ENCODE measurements at regions of chr18 and their contacts with region 1.

Region 1: GRCh38 chr18:25921677-25922421 is 168.6 kb downstream of the SS18 start:
- DNase-seq: peak in 2 of 6 donors; percentile 7 to 46
- ATAC-seq: peak in 3 of 4 donors; percentile 56 to 82 (median 78)
- H3K4me3 ChIP-seq: no peak overlapping the region
- H3K27ac ChIP-seq: no peak overlapping the region
- H3K4me1 ChIP-seq: no peaks in the 10 kb centered on the region
- H3K27me3 ChIP-seq: no peaks in the 10 kb centered on the region
- CTCF ChIP-seq: peak; percentile 8 to 38 (median 20)

Region 2: DNA sequence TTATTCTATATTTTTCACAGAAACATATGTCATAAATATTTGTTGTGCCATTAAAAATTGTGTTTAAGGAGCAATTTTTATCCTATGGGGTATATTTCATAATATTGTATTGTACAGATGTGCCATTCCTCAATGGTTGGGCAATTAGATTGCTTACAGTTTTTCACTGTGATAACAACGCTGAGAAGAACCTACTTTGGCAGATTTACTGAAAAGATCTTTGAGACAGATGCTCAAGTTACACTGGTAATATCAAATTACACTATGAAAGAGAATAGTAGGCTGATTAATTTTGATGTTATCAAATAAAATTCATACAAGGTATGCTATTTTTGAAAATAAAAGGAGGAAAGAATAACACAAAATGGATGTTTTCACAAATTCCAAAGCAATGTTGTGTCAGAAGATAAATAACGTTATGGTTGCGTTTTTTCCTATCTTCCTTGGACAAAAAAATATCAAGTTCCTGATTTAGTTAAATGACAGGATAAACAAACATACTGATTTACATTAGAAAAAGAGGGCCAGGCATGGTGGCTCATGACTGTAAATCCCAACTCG is 234.8 kb before region 1 on chr18:
- intact Hi-C with region 1: no loop called
- DNase-seq: no peak
- ATAC-seq: no peak
- H3K4me3 ChIP-seq: no peak overlapping the region
- H3K27ac ChIP-seq: no peak overlapping the region
- H3K4me1 ChIP-seq: no peaks in the 10 kb centered on the region
- H3K27me3 ChIP-seq: no peaks in the 10 kb centered on the region
- CTCF ChIP-seq: no peak

Region 3: DNA sequence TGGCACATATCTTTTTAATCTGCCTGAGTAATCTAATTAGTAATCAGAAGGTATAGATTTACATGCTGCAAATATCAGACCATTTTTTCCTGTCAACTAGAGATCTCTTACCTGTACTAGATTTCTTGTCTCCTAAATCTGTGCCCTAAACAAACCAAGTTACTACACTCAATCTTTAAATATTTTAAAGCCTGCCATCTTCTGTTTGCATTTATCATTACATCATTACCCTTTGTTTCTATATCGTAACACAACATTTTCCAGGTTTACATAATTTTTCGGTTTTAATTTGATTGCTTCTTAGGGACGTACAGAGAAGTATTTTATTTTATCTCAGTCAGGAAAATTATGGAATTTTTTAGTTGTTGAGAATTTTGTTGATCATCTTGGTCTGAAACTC is 237.5 kb after region 1 on chr18:
- intact Hi-C with region 1: loop called in 1 of 3 experiments (anchors 10 kb)
- DNase-seq: no peak
- ATAC-seq: no peak
- H3K4me3 ChIP-seq: no peak overlapping the region
- H3K27ac ChIP-seq: no peak overlapping the region
- H3K4me1 ChIP-seq: no peaks in the 10 kb centered on the region
- H3K27me3 ChIP-seq: no peaks in the 10 kb centered on the region
- CTCF ChIP-seq: peak in 1 of 4 donors; percentile 7